Colonic mucosa (tissue), 4 donors: ENCODE measurements at regions of chr17 and their contacts with region 1.

Region 1: GRCh38 chr17:21463779-21464407 is 87.7 kb downstream of the KCNJ12 start:
- DNase-seq: no peak
- H3K4me3 ChIP-seq: no peak overlapping the region
- H3K27ac ChIP-seq: no peak overlapping the region
- H3K4me1 ChIP-seq: no peaks in the 10 kb centered on the region
- H3K27me3 ChIP-seq: no peaks in the 10 kb centered on the region
- CTCF ChIP-seq: no peak

Region 2: DNA sequence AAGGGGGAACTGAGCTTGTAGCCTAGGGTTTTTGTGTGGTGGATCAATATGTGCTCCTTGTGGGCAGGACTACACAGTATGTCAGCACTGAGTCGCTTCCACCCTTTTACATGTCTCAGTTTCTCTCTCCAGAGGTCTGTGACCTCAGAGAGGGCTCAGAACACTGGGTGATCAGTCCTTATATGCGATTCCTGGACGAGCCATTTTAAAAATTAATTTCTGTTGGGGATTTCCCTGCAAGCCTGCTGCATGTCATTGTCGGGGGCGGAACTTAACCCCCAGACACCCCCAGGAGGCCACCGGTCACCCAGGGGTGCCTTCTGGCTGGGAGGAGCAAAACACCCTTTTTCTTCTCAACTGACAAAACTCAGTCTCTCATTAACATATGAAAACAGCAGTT is 323.0 kb before region 1 on chr17:
- intact Hi-C with region 1: no loop called
- DNase-seq: no peak
- H3K4me3 ChIP-seq: no peak overlapping the region
- H3K27ac ChIP-seq: no peak overlapping the region
- H3K4me1 ChIP-seq: no peaks in the 10 kb centered on the region
- H3K27me3 ChIP-seq: no peaks in the 10 kb centered on the region
- CTCF ChIP-seq: no peak

Region 3: DNA sequence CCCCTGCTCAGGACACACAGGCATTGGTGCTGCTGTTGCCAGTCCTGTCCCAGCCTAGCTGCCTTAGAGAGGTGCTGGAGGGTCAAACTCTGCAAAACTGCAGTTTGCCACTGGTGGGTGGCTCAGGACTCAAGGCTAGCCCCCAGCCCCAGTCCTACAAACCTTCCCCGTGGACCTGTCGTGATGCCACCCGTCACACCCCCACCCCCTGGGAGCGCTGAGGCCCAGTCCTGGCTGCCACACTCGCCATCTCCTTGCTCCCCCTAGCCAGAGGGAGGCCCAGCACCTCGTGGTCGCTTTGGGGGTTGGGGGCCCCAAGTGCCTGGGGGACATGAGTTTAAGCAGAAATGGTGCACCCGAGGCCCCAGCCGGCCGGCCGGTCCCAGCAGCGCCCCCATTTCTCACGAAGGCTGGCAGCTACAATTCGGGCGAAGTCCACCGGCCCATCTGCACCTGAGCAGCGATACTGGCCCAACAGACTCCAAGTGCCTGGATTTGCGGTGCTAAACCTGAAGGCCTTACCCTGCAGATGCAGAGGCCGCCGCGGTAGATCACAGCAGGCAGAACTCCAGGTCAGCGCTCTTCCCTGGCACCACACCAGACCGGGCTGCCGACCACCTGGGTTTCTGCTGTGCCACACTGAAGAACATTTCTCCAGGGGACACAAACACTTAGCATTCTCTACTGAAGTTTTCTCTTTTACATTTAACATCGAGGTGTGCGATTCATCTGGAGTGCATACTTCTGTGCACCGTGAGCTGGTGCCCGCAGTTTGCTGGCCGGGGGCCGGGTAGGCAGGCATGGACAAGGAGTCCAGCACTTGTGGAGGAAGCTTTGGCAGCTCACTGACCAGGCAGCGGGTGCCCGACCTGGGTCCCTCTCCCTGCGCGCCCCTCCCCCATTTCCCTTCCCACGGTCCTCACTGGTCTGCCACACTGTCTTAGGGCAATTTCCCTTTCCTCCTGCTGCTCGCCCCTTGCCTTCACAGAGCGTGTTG is 42.2 kb after region 1 on chr17:
- intact Hi-C with region 1: loop called (anchors 2 kb)
- DNase-seq: no peak
- H3K4me3 ChIP-seq: no peak overlapping the region
- H3K27ac ChIP-seq: no peak overlapping the region
- H3K4me1 ChIP-seq: no peaks in the 10 kb centered on the region
- H3K27me3 ChIP-seq: no peaks in the 10 kb centered on the region
- CTCF ChIP-seq: no peak